ENCODE measurements at regions of chr16 and their contacts with region 1.

Region 1: GRCh38 chr16:70438969-70439862 is at the start of gene ST3GAL2:
- DNase-seq: peak; percentile 95
- H3K4me3 ChIP-seq: peak within 1 kb of the TSS; percentile 53 to 88 (median 66)
- H3K27ac ChIP-seq: peak within 1 kb of the TSS; percentile 42
- H3K4me1 ChIP-seq: peaks cover 32% of the 10 kb centered on the region
- H3K27me3 ChIP-seq: no peaks in the 10 kb centered on the region
- CTCF ChIP-seq: no peak
- POLR2A ChIP-seq: peak; percentile 34
- total RNA-seq, gene ST3GAL2: 50.2 and 50.4 TPM in 2 replicates

Region 2: DNA sequence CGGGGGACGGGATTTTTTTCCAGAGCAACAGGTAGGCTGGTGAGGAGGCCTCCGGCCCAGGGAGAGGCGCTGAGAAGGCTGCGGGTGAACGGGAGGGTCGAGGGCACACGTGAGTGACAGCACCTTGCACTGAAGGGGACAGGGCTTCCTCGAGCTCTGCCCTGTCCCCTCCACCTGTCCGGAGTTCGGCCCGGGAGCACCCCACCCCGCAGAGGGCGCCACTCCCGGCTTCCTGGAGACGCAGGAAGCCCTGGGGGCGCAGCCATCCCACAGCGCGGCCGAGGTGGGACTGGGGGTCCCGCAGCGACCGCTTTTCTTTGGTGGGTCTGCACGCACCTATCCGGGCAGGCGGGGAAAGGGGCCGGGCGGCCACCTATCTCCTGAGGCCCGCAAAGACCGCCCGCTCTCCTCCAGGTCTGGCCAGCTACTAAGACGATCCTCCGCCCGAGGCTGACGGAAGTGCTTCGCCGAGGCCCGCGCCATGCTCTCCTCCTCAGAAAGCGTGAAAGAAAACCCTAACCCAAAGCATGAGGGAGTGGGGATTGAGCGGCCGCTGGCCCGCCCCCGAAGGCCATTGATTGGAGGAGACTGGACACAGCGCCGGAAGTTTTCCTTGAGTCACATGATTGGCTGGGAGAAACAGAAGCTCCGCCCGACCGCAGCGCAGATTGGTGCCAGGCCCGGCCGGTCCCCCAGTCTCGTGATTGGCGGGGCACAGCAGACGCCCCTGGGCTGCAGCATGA is 58.2 kb before region 1 on chr16:
- CTCF ChIA-PET with region 1: interaction called, 6 read pairs
- POLR2A ChIA-PET with region 1: interaction called, 3 read pairs
- dilution Hi-C with region 1: no loop called
- intact Hi-C with region 1: loop called (anchors 1 kb)
- DNase-seq: peak; percentile 98
- H3K4me3 ChIP-seq: peak overlapping the region; percentile 51 to 59 (median 54)
- H3K27ac ChIP-seq: no peak overlapping the region
- H3K4me1 ChIP-seq: peaks cover 6% of the 10 kb centered on the region
- H3K27me3 ChIP-seq: no peaks in the 10 kb centered on the region
- CTCF ChIP-seq: peak; percentile 6 to 9
- POLR2A ChIP-seq: peak; percentile 94

Region 3: DNA sequence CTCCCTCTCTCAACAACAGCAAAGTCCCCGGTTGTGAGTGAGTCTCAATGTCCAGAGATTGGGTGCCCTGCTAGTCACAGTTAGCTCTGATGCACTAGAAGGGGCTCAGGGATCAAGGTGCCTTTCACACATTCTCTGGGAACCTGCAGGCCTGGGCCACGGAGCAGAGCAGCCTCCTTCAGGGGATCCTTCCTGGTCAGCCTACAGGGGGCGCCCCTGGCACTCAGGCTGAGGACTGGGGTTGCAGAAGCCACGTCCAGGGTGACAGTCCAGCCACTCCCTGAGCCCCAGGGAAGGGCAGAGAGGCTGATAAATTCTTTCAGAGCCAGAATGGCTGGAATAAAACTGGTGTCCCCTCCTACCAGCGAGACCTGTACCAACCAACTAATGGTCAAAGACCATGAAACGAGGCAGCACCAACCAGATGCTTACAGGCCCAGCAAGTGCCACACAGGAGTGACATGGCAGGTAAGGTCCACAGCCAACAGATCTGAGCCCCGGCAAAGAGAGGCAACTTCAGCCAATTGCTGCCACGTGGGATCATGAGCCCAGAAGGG is 43.8 kb before region 1 on chr16:
- CTCF ChIA-PET with region 1: interaction called, 8 read pairs
- POLR2A ChIA-PET with region 1: no interaction called
- dilution Hi-C with region 1: no loop called
- intact Hi-C with region 1: loop called (anchors 1 kb)
- DNase-seq: peak; percentile 59
- H3K4me3 ChIP-seq: no peak overlapping the region
- H3K27ac ChIP-seq: no peak overlapping the region
- H3K4me1 ChIP-seq: no peaks in the 10 kb centered on the region
- H3K27me3 ChIP-seq: no peaks in the 10 kb centered on the region
- CTCF ChIP-seq: peak; percentile 76 to 89
- POLR2A ChIP-seq: no peak

Region 4: GRCh38 chr16:70428178-70428998 is 10.8 kb before region 1 on chr16:
- CTCF ChIA-PET with region 1: interaction called, 5 read pairs
- POLR2A ChIA-PET with region 1: no interaction called
- dilution Hi-C with region 1: no loop called
- intact Hi-C with region 1: loop called (anchors 1 kb)
- DNase-seq: peak; percentile 96
- H3K4me3 ChIP-seq: no peak overlapping the region
- H3K27ac ChIP-seq: peak overlapping the region; percentile 86
- H3K4me1 ChIP-seq: peaks cover 54% of the 10 kb centered on the region
- H3K27me3 ChIP-seq: no peaks in the 10 kb centered on the region
- CTCF ChIP-seq: no peak
- POLR2A ChIP-seq: peak; percentile 77

Region 5: DNA sequence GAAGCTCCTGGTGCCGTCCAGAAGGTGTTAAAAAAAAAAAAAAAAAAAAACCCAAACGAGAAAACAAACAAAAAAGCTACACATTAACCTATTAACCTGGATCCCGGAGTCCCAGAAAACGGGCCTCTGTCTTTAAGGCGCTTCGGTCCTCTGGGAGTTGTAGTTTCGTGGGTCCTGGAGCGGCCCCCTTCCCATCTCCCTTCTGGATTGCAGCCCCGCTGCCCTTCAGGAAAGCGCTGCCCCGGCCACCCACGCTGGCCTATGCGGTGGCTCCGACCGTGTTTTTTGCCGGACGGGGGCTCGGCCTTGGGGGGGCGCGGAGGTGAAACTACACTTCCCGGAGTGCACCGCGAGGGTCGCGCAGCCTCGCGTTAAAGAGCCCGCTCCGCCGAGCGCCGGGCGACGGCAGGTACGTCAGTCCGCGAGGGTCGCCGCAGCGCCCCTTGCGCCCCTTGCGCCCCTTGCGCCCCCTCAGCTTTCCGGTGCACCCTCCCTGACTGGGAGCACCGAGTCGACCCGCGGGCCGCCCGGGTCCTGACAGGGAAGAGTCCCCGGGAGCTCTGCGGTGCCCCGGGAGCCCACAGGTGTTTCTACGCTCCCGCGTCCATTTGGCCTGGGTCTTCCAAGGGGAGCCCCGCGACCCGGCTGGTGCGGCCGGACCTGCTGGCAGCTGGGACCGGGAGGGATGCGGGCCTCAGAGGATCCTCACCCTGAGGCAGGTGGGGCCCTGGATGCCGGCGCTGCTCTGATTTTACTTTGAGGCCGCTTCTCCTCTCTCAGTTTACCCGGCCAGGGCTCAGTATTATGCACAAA is 15.2 kb after region 1 on chr16 and contains the start of gene FCSK:
- CTCF ChIA-PET with region 1: interaction called, 5 read pairs
- POLR2A ChIA-PET with region 1: no interaction called
- dilution Hi-C with region 1: no loop called
- intact Hi-C with region 1: loop called (anchors 1 kb)
- DNase-seq: peak; percentile 86
- H3K4me3 ChIP-seq: peak within 1 kb of the TSS; percentile 72 to 95 (median 89)
- H3K27ac ChIP-seq: peak within 1 kb of the TSS; percentile 100
- H3K4me1 ChIP-seq: peaks cover 6% of the 10 kb centered on the region
- H3K27me3 ChIP-seq: no peaks in the 10 kb centered on the region
- CTCF ChIP-seq: no peak
- POLR2A ChIP-seq: peak; percentile 33
- total RNA-seq, gene FCSK: 13.2 and 18.0 TPM in 2 replicates

Region 6: GRCh38 chr16:70523076-70523742 is 84.0 kb after region 1 on chr16 and contains the start of gene COG4:
- CTCF ChIA-PET with region 1: interaction called, 3 read pairs
- POLR2A ChIA-PET with region 1: no interaction called
- dilution Hi-C with region 1: no loop called
- intact Hi-C with region 1: loop called (anchors 2 kb)
- DNase-seq: peak; percentile 84
- H3K4me3 ChIP-seq: peak within 1 kb of the TSS; percentile 54 to 94 (median 85)
- H3K27ac ChIP-seq: peak within 1 kb of the TSS; percentile 82
- H3K4me1 ChIP-seq: peaks cover 40% of the 10 kb centered on the region
- H3K27me3 ChIP-seq: no peaks in the 10 kb centered on the region
- CTCF ChIP-seq: no peak
- POLR2A ChIP-seq: peak; percentile 83
- total RNA-seq, gene COG4: 46.5 and 61.2 TPM in 2 replicates

Region 7: DNA sequence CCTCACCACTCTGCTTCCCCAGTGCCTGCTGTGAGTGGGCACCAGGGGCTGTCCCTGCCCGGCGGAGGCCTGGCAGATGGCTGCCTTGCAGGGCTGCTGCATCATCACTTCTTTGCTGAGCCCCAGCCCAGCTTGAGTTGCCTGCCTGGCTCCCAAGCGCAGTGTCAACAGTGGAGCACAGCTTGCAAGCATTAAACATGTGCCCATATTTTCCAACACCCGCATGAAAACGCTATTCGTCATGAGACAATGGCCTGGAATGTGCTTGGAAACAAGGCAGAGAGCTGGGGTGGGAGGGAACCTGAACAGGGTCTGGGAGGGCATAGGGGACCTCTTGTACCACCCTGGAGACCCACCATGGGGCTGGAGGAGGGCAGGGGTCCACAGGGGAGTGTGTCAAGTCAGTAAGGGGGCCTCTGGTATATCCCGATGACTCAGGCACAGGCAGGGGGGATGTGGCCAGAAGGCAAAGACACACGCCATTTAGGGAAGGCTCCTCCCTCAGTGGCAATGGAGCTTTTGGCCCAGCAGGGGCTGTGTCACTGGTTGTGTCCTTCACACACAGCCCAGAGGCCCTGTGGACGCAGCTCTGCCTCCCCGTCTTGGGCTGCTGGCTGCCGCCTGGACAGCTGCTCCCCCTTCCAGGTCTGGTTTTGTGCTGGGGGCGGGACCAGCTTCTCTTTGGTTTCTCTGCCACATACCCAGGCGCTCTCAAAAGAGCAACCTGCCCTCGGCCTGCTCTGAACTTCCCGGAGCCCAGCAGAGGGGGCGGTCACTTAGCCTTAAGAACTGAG is 264.0 kb after region 1 on chr16:
- CTCF ChIA-PET with region 1: no interaction called
- POLR2A ChIA-PET with region 1: no interaction called
- dilution Hi-C with region 1: no loop called
- intact Hi-C with region 1: no loop called
- DNase-seq: no peak
- H3K4me3 ChIP-seq: no peak overlapping the region
- H3K27ac ChIP-seq: no peak overlapping the region
- H3K4me1 ChIP-seq: peaks cover 19% of the 10 kb centered on the region
- H3K27me3 ChIP-seq: no peaks in the 10 kb centered on the region
- CTCF ChIP-seq: no peak
- POLR2A ChIP-seq: no peak

Measured in endothelial cell of umbilical vein (primary cell).